GM10248 (cell line): ENCODE measurements at regions of chr19 and their contacts with region 1.

Region 1: GRCh38 chr19:18141031-18141430 is 11.9 kb upstream of the PIK3R2 start:
- DNase-seq: no peak
- CTCF ChIP-seq: no peak

Region 2: DNA sequence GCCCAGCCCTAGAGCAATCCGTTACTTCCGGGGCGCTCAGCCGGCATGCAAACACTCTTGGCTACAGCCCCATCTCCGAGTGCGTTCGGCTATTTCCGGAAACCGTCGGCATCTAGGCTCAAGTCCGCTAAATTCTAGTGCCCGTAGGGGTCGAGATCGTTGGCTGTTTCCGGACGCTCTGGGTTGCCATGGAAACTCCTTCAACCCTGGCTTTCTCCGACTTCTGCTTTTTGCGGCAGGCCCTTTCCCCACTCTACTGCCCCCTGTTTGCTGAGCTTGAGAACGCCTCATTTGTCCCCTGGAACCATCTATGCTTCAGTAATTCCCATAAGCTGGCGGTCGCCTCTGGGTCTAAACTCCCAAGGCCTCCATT is 11.4 kb after region 1 on chr19:
- CTCF ChIA-PET with region 1: interaction called, 16 read pairs
- POLR2A ChIA-PET with region 1: no interaction called
- DNase-seq: peak; percentile 100
- CTCF ChIP-seq: peak; percentile 55

Region 3: DNA sequence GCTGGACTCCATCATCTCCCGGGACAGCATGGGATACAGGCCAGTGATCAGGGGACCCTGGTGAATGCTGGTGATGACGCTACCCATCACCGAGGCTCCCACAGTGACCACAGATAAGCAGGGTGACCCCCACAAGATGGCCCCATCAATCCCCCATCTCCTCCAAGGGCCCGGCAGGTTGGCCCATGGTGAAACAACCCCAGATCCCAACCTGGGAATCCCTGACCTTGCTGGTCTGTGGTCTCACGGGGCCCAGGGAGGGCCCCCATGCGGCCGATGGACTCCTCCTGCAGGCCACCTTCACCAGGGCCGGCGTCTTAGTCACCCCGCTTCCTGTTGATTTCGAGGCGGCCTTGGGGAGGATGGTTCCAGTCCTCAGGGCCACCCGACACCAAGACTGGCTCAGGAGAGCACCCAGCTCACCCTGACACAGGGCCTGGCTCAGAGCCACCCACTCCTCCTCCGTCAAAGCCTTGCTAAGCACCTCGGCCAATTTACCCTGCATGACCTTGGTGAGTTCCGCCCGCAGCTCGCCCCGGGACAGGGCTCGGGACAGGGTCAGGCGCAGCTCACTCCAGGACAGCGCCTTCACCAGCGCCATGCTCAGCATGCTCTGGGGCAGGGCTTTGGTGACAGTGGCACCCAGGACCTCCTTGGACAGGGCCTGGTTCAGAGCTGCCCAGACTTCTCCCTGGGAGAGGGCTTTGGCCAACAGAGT is 123.3 kb after region 1 on chr19:
- CTCF ChIA-PET with region 1: no interaction called
- POLR2A ChIA-PET with region 1: no interaction called
- DNase-seq: no peak
- CTCF ChIP-seq: no peak